AG04449 (cell line): ENCODE measurements at regions of chr5 and their contacts with region 1.

Region 1: GRCh38 chr5:87780831-87781760 is 368.4 kb upstream of the CCNH start:
- DNase-seq: peak; percentile 37
- H3K4me3 ChIP-seq: no peak overlapping the region
- CTCF ChIP-seq: peak; percentile 86

Region 2: GRCh38 chr5:87231037-87231819 is 549.9 kb before region 1 on chr5:
- CTCF ChIA-PET with region 1: no interaction called
- POLR2A ChIA-PET with region 1: no interaction called
- DNase-seq: no peak
- H3K4me3 ChIP-seq: no peak overlapping the region
- CTCF ChIP-seq: no peak

Region 3: DNA sequence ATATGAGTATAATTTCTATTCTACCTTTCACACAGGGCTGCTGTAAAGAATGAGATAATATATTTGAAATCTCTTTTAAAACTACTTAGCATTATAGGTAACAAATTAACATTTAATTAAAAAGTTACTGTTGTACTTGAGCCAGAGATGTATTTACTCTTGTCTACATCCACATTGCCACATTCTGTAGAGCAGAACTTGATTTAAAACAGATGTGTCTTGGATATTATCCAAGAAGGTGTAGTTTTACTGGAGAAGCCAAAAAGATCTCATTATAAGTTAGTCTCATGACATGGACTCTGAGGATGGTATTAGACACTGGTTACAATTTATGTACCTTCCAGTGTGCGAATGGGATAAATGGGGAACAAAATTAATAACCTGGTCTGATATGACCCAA is 75.2 kb before region 1 on chr5:
- CTCF ChIA-PET with region 1: no interaction called
- POLR2A ChIA-PET with region 1: no interaction called
- DNase-seq: no peak
- H3K4me3 ChIP-seq: no peak overlapping the region
- CTCF ChIP-seq: no peak

Region 4: DNA sequence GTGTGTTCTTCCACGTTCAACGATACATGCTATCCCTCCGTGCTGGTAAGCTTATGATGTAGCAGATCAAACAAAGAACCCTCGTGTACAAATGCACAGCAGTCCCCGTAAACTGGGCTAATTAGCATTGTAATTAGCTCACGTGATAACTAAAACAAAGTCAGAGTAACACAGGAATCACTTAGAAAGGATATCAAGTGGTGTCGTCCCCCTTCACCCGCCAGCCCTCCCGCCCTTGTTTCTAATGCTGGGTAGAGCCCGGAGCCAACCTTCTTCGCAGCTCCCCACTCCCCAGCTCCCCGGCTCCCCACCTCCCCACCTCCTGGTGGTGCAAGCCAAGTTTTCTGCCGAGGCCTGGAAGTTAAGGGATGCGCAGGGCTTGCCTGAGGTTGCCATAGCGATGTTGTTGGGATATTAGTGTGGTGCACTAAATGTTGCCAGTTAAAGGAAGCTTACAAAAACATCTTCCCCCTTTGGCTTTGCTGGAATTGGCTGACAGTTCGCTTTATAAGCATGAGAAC is 10.4 kb before region 1 on chr5:
- CTCF ChIA-PET with region 1: interaction called, 22 read pairs
- POLR2A ChIA-PET with region 1: no interaction called
- DNase-seq: no peak
- H3K4me3 ChIP-seq: no peak overlapping the region
- CTCF ChIP-seq: no peak

Region 5: DNA sequence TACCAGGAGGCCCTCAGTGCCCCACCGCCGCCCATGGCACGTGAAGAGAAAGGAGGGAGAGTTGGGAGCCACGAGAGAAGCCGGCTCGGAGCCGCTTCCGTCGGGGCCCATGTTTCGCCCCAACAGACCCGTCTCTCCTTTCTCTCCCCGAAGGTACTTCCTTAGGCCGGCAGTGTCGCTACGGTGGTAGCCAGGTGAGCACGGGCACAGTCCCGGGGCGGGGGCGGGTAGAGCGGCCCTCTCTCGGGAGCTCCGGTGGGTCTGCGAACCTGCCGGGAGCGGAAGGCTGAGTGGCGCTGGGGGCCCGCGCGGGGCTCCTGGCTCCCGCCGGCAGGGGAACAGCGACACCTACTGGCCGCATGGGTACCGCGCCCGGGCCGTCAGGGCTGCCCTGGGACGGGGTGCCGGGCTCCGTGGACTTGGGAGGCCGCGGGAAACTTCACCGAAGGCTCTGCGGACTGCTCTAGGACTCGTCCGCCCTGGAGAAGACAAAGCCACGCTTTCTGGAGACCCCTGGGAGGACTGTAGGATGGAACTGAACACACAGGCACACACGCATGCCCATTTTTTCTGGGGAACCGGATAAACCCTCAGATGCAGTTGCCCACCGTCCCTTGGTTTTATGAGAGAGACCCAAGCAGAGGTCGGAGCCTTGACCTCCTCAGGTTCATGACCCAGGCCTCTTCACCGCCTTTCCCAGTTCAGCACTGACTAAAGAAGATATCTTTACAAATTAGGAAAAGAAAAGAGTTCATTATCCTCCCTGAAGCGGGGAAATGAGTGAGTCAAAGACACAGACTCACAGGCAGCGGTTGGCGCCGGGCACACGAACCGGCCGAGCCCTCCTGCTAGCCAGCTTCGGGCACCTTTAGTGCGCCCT is 899.4 kb after region 1 on chr5:
- CTCF ChIA-PET with region 1: interaction called, 32 read pairs
- POLR2A ChIA-PET with region 1: no interaction called
- DNase-seq: no peak
- H3K4me3 ChIP-seq: peak overlapping the region; percentile 48
- CTCF ChIP-seq: peak; percentile 93

Region 6: GRCh38 chr5:88690409-88691229 is 909.5 kb after region 1 on chr5:
- CTCF ChIA-PET with region 1: interaction called, 125 read pairs
- POLR2A ChIA-PET with region 1: interaction called, 5 read pairs
- DNase-seq: no peak
- H3K4me3 ChIP-seq: peak overlapping the region; percentile 40
- CTCF ChIP-seq: peak; percentile 93